H1 (cell line): ENCODE measurements at regions of chr9 and their contacts with region 1.

Region 1: GRCh38 chr9:108565651-108566378 is 290.0 kb downstream of the ACTL7B start:
- DNase-seq: peak in 1 of 2 experiments; percentile 31
- H3K4me3 ChIP-seq: no peak overlapping the region
- H3K27ac ChIP-seq: no peak overlapping the region
- H3K4me1 ChIP-seq: no peaks in the 10 kb centered on the region
- H3K27me3 ChIP-seq: no peaks in the 10 kb centered on the region
- CTCF ChIP-seq: peak; percentile 39 to 87 (median 78)
- EP300 ChIP-seq: no peak
- POLR2A ChIP-seq: no peak
- RAD21 ChIP-seq: peak; percentile 95 to 96

Region 2: DNA sequence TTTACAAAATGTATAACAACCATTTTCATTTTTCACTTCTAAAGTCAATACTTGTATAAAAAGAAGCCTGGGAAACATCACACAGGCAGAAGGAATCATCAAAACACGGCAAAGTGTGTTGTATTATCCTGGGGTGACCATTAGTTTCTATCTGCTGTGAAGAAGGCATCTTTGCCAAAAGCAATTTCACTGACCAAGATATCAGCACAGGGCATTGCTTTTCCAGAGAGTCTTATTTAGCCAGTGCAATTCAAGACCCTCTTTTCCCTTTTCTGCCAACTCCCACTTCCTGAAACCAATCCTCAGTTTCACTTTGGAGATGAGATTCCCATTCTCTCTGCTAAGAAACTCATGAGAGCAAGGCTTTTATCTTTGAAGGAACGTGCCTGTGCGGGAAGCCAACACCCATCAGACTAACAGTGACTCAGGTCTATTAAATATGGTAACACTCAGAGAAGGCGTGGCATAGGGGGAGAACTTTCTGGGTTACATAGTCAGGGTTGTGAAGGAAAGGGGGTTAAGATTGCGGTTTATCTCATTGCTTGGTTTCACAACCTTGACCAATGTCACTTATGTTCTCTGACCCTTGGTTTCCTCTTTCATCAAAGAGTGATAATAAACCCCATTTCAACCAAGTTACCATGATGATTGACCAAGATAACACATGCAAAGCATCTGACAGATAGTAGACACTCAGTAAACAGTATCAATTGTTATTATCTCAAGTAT is 409.4 kb before region 1 on chr9:
- CTCF ChIA-PET with region 1: no interaction called
- POLR2A ChIA-PET with region 1: no interaction called
- DNase-seq: no peak
- H3K4me3 ChIP-seq: no peak overlapping the region
- H3K27ac ChIP-seq: no peak overlapping the region
- H3K4me1 ChIP-seq: no peaks in the 10 kb centered on the region
- H3K27me3 ChIP-seq: no peaks in the 10 kb centered on the region
- CTCF ChIP-seq: no peak
- EP300 ChIP-seq: no peak
- POLR2A ChIP-seq: no peak
- RAD21 ChIP-seq: no peak

Region 3: GRCh38 chr9:108412755-108413154 is 153.1 kb before region 1 on chr9:
- CTCF ChIA-PET with region 1: interaction called, 10 read pairs
- POLR2A ChIA-PET with region 1: no interaction called
- DNase-seq: peak; percentile 50 to 70
- H3K4me3 ChIP-seq: no peak overlapping the region
- H3K27ac ChIP-seq: no peak overlapping the region
- H3K4me1 ChIP-seq: no peaks in the 10 kb centered on the region
- H3K27me3 ChIP-seq: no peaks in the 10 kb centered on the region
- CTCF ChIP-seq: peak; percentile 57 to 74 (median 68)
- EP300 ChIP-seq: no peak
- POLR2A ChIP-seq: no peak
- RAD21 ChIP-seq: peak; percentile 65 to 67

Region 4: DNA sequence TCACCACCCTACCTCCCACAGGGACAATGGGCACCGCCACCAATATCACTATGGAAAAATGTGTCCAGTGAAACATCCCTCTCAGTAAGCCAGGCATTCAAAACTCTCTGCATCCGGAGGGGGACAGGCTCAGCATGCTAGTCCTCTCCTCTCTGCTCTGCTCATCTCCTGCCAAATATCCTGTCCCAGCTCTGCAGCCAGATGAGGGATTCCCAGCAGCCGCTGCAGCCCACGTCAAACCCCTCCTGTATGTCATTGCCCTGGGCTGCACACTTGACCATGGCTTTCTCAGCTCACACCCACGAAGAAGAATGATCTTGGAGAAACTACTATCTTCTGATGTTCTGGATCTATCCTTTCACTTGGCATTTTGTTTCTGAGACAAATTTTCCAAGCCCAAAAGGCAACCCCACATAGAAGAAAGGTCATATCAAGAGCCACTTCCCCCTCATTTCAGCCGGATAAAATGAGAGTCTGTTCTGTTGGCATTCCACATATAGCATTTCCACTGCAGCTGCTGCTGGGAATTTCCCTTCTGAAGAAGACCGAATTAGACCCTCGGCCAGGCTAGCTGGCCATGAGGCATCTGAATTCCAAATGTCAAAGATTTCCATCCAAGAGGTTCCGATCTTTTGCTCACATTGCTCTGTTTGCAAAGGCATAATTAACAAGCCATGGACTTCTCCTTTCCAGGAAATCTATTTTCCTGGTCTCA is 48.0 kb before region 1 on chr9:
- CTCF ChIA-PET with region 1: interaction called, 17 read pairs
- POLR2A ChIA-PET with region 1: no interaction called
- DNase-seq: no peak
- H3K4me3 ChIP-seq: no peak overlapping the region
- H3K27ac ChIP-seq: no peak overlapping the region
- H3K4me1 ChIP-seq: no peaks in the 10 kb centered on the region
- H3K27me3 ChIP-seq: no peaks in the 10 kb centered on the region
- CTCF ChIP-seq: no peak
- EP300 ChIP-seq: no peak
- POLR2A ChIP-seq: no peak
- RAD21 ChIP-seq: no peak

Region 5: DNA sequence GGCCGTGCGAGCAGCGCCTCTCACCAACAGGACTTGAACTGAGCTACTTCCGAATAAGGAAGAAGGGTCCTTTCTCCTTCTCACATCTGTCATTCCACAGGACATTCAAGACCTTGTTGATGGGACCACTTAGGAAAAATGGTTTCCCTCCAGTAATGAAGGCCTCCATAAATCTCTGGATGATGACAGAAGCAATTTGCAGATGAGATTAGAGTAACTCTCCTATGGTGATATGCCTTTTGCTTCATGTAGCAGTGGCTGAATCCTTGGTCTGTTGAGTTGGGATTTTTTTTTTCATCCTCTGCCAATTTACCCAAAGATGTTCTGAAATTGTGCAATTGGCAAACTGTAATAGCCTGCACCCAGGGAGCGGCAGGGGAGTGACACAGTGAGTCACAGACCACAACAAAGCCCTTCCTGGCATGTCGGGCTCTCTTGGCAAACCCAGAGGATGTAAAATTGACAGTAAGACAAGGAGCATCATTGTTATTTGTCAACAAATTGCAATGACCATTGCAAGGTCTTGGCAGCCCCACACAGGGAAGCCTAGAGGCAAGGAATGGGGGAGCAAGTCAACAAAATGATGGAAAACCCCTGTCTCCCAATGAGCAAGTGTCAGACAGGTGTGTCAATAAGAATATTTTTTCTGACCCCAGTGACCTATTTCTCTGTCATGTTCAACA is 14.1 kb after region 1 on chr9:
- CTCF ChIA-PET with region 1: interaction called, 13 read pairs
- POLR2A ChIA-PET with region 1: no interaction called
- DNase-seq: no peak
- H3K4me3 ChIP-seq: no peak overlapping the region
- H3K27ac ChIP-seq: no peak overlapping the region
- H3K4me1 ChIP-seq: no peaks in the 10 kb centered on the region
- H3K27me3 ChIP-seq: no peaks in the 10 kb centered on the region
- CTCF ChIP-seq: no peak
- EP300 ChIP-seq: no peak
- POLR2A ChIP-seq: no peak
- RAD21 ChIP-seq: no peak

Region 6: GRCh38 chr9:108621991-108622855 is 56.4 kb after region 1 on chr9:
- CTCF ChIA-PET with region 1: no interaction called
- POLR2A ChIA-PET with region 1: no interaction called
- DNase-seq: no peak
- H3K4me3 ChIP-seq: no peak overlapping the region
- H3K27ac ChIP-seq: no peak overlapping the region
- H3K4me1 ChIP-seq: no peaks in the 10 kb centered on the region
- H3K27me3 ChIP-seq: no peaks in the 10 kb centered on the region
- CTCF ChIP-seq: no peak
- EP300 ChIP-seq: no peak
- POLR2A ChIP-seq: no peak
- RAD21 ChIP-seq: no peak

Region 7: DNA sequence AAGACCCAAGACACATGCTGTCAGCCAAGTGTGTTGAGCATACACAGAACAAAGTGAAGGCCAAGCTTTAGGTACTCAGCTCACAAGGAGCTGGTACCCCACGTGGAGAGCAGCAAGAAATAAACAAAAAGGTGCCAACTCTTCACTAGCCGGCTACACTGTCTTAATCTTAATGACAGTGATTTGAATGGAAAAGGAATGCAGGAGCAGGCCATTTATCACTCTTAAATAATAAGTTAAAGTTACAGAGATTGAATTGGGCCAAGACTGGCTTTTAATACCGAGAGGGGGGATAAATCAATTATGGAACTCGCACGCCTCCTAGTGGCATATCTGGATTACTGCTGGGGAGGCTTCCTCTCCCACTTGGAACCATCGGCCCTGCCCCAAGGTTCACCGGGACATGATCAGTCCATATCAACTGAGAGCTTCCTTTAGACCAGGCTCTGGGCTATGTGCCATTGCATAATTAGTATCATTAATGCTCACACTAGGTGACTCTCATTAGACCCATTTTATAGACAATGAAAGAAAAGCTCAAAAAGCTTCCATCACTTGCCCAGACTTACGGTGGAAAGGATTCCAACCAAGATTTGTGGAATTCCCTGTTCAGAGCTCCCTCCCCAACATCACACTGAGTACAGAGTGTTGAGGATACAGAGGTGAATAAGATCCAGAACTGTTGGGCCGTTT is 196.0 kb after region 1 on chr9:
- CTCF ChIA-PET with region 1: interaction called, 10 read pairs
- POLR2A ChIA-PET with region 1: no interaction called
- DNase-seq: peak; percentile 21 to 71
- H3K4me3 ChIP-seq: no peak overlapping the region
- H3K27ac ChIP-seq: no peak overlapping the region
- H3K4me1 ChIP-seq: 0 out of 7 replicates have a peak, but pooled peaks cover 0 to 1% (median 0%) of the 10 kb centered on the region in 4 experiments
- H3K27me3 ChIP-seq: no peaks in the 10 kb centered on the region
- CTCF ChIP-seq: peak; percentile 71 to 84 (median 82)
- EP300 ChIP-seq: no peak
- POLR2A ChIP-seq: no peak
- RAD21 ChIP-seq: peak; percentile 90 to 92